ENCODE measurements at regions of chr5 and their contacts with region 1.

Region 1: GRCh38 chr5:143446535-143447226 is 43.2 kb upstream of the NR3C1 start:
- DNase-seq: no peak
- H3K4me3 ChIP-seq: no peak overlapping the region
- H3K27me3 ChIP-seq: no peaks in the 10 kb centered on the region
- CTCF ChIP-seq: no peak

Region 2: GRCh38 chr5:143594913-143595841 is 148.5 kb after region 1 on chr5:
- CTCF ChIA-PET with region 1: no interaction called
- POLR2A ChIA-PET with region 1: interaction called, 12 read pairs
- DNase-seq: no peak
- H3K4me3 ChIP-seq: no peak overlapping the region
- H3K27me3 ChIP-seq: no peaks in the 10 kb centered on the region
- CTCF ChIP-seq: no peak

Region 3: DNA sequence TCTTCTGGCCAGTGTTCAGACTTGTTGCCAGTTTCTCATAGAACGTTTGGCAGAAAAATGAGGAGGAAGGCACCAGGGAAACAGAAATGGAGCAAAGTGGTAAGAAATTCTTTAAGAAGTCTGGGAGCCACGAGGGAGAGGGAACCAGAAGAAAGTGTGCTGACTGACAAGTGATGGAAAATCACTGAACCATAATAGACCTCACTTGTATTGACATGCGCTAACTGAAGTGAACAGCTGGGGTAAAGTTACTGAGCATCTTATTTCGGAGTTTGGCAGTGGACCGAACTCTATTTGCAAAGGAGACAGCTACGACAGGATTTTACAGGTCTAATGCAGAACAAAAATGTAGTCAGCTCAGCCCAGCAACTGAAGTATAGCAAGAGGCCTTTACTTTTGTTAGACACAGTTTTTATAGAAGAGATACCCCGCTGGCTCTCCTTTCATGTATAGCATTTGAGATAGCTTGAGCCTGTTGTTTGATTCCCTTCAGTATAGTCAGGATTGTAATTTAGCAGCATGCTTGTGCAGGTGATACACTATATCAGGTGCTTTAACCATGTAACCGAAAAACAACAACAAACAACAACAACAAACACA is 418.8 kb after region 1 on chr5:
- CTCF ChIA-PET with region 1: no interaction called
- POLR2A ChIA-PET with region 1: no interaction called
- DNase-seq: no peak
- H3K4me3 ChIP-seq: no peak overlapping the region
- H3K27me3 ChIP-seq: no peaks in the 10 kb centered on the region
- CTCF ChIP-seq: no peak

Measured in BJ (cell line).